ENCODE measurements at regions of chr16 and their contacts with region 1.

Region 1: GRCh38 chr16:71808593-71809459 is at the start of gene AP1G1:
- DNase-seq: peak; percentile 78 to 98 (median 94)
- ATAC-seq: peak; percentile 90
- H3K4me3 Mint-ChIP-seq: peak within 1 kb of the TSS; percentile 92 to 100 (median 98)
- H3K27ac Mint-ChIP-seq: peak within 1 kb of the TSS; percentile 99 to 100 (median 100)
- H3K4me1 Mint-ChIP-seq: peaks cover 7 to 48% (median 39%) of the 10 kb centered on the region in 4 donors
- H3K27me3 Mint-ChIP-seq: no peaks in the 10 kb centered on the region
- polyA plus RNA-seq, gene AP1G1: 6.2 to 9.5 (median 9.1) TPM

Region 2: GRCh38 chr16:71781741-71782140 is 27.1 kb before region 1 on chr16:
- POLR2A ChIA-PET with region 1: no interaction called
- DNase-seq: no peak
- ATAC-seq: no peak
- H3K4me3 Mint-ChIP-seq: no peak overlapping the region
- H3K27ac Mint-ChIP-seq: peak overlapping the region in 3 of 10 donors; percentile 11 to 79 (median 46)
- H3K4me1 Mint-ChIP-seq: peaks cover 6 to 39% (median 23%) of the 10 kb centered on the region in 4 donors
- H3K27me3 Mint-ChIP-seq: no peaks in the 10 kb centered on the region

Region 3: DNA sequence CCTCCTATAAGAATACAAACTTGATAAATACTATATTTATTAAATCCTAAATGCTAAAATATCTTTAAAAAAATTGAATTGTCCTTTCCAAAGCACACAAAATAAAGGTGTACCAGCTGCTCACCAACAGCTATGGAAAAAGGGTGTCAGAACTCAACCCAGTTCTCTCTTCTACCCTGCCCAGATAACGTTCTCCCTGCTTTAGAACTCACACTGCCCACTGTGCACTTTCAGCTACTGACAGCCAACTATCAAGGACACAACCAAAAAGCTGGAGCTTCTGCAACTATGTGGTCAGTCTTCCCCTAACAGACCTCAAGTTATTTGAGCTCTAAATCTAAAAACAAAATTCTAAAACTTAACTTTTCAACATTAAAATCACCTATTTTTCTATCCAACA is 13.9 kb before region 1 on chr16:
- POLR2A ChIA-PET with region 1: interaction called, 11 read pairs
- DNase-seq: no peak
- ATAC-seq: no peak
- H3K4me3 Mint-ChIP-seq: peak overlapping the region in 9 of 10 donors; percentile 2 to 63 (median 50)
- H3K27ac Mint-ChIP-seq: peak overlapping the region; percentile 65 to 89 (median 80)
- H3K4me1 Mint-ChIP-seq: peaks cover 21 to 79% (median 68%) of the 10 kb centered on the region in 4 donors
- H3K27me3 Mint-ChIP-seq: no peaks in the 10 kb centered on the region

Region 4: GRCh38 chr16:71845639-71846430 is 37.0 kb after region 1 on chr16 and contains the start of gene ATXN1L:
- POLR2A ChIA-PET with region 1: interaction called, 24 read pairs
- DNase-seq: peak; percentile 88 to 97 (median 95)
- ATAC-seq: peak; percentile 95 to 97
- H3K4me3 Mint-ChIP-seq: peak within 1 kb of the TSS; percentile 90 to 96 (median 92)
- H3K27ac Mint-ChIP-seq: peak within 1 kb of the TSS; percentile 92 to 99 (median 98)
- H3K4me1 Mint-ChIP-seq: peaks cover 15 to 47% (median 41%) of the 10 kb centered on the region in 4 donors
- H3K27me3 Mint-ChIP-seq: no peaks in the 10 kb centered on the region
- polyA plus RNA-seq, gene ATXN1L: 4.8 to 8.5 (median 7.5) TPM

Region 5: GRCh38 chr16:71883849-71884638 is 75.2 kb after region 1 on chr16 and contains the start of gene ZNF821:
- POLR2A ChIA-PET with region 1: interaction called, 76 read pairs
- DNase-seq: peak; percentile 62 to 91 (median 78)
- ATAC-seq: peak; percentile 46 to 61
- H3K4me3 Mint-ChIP-seq: peak within 1 kb of the TSS; percentile 92 to 99 (median 94)
- H3K27ac Mint-ChIP-seq: peak within 1 kb of the TSS; percentile 87 to 98 (median 92)
- H3K4me1 Mint-ChIP-seq: peaks cover 35 to 54% (median 53%) of the 10 kb centered on the region in 4 donors
- H3K27me3 Mint-ChIP-seq: peaks cover 0 to 2% (median 0%) of the 10 kb centered on the region in 5 donors
- polyA plus RNA-seq, gene ZNF821: 4.3 to 5.4 (median 4.9) TPM

Region 6: DNA sequence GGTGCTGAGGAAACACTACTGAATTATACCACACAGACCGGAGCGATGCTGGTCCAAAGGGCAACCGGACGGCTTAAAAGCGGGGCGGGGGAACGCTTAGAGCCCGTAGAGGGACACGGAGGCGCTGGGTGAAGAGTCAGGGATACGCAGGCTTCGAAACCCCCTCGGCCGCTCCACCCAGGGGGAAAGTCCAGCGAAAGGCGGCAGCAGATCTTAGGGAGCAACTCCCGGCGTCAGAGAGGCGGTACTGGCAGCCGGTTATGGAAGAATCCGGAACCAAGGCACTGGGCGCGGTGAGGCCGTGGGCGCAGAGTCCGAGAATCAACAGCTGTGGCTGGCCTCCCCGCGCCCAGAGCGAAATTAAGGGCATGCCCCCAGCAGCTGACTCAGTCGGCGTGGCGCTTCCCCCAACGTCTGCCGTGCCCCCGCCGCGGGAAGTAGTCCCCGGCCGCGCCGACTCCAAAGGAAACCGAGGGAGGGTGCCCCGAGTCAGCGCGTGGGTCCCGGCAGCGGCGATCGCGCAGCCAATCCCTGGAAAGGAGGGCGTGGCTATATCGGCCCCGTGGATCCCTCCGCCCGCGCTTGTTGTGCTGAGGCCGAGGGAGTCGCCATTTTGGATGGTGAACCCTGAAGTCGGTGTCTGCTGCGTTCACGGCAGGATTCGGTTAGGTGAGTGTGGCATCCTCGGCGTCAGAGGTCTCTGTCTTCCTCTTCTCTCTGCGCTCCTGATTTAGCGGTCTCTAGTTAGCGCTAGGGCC is 86.3 kb after region 1 on chr16 and contains the start of gene IST1:
- POLR2A ChIA-PET with region 1: interaction called, 62 read pairs
- DNase-seq: peak; percentile 93 to 99 (median 98)
- ATAC-seq: peak; percentile 88 to 89
- H3K4me3 Mint-ChIP-seq: peak within 1 kb of the TSS; percentile 95 to 98 (median 96)
- H3K27ac Mint-ChIP-seq: peak within 1 kb of the TSS; percentile 94 to 98 (median 97)
- H3K4me1 Mint-ChIP-seq: peaks cover 11 to 45% (median 29%) of the 10 kb centered on the region in 4 donors
- H3K27me3 Mint-ChIP-seq: no peaks in the 10 kb centered on the region
- polyA plus RNA-seq, gene IST1: 115 to 161 (median 115) TPM

Measured in naive thymus-derived CD8-positive, alpha-beta T cell (primary cell).